ENCODE measurements at regions of chr3 and their contacts with region 1.

Region 1: GRCh38 chr3:196969660-196970546 is 1.3 kb upstream of the PIGZ start:
- DNase-seq: no peak
- H3K4me3 ChIP-seq: peak overlapping the region; percentile 74 to 96 (median 86)
- H3K27ac ChIP-seq: peak overlapping the region; percentile 80 to 89 (median 88)
- H3K4me1 ChIP-seq: peaks cover 4 to 18% (median 10%) of the 10 kb centered on the region in 3 donors
- H3K27me3 ChIP-seq: no peaks in the 10 kb centered on the region
- CTCF ChIP-seq: peak; percentile 49 to 96 (median 90)
- POLR2A ChIP-seq: no peak

Region 2: DNA sequence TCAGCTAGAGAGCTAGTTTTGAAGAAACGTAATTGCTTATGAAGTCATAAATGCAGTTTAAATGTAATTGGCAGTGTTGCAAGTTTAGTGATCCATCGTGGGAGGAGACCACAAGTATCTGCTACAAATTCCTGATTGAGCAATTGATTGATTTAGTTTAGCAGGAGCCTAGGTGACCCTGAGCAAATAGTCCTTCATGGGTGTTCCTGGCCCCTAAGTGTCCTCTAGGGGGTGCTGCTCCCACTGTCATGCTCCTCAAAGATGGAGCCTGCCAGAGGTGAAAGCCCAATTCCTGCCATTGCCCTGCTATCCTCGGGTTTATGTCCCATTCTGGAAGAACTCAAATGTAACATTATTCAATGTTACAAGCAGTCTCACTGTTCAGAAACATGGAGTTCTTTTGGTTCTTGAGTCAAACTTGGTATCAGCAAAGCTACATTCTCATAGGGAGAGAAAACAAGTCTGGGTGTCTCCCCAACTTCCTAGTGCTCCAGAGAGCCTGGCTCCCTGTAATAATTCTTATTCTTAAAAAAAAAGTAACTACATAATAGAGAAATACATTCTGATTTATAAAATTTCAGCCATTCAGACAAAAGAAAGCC is 132.0 kb before region 1 on chr3:
- intact Hi-C with region 1: loop called (anchors 10 kb)
- DNase-seq: no peak
- H3K4me3 ChIP-seq: no peak overlapping the region
- H3K27ac ChIP-seq: no peak overlapping the region
- H3K4me1 ChIP-seq: no peaks in the 10 kb centered on the region
- H3K27me3 ChIP-seq: no peaks in the 10 kb centered on the region
- CTCF ChIP-seq: peak in 5 of 6 experiments; percentile 56 to 74 (median 67)
- POLR2A ChIP-seq: no peak